ENCODE measurements at regions of chr7 and their contacts with region 1.

Region 1: DNA sequence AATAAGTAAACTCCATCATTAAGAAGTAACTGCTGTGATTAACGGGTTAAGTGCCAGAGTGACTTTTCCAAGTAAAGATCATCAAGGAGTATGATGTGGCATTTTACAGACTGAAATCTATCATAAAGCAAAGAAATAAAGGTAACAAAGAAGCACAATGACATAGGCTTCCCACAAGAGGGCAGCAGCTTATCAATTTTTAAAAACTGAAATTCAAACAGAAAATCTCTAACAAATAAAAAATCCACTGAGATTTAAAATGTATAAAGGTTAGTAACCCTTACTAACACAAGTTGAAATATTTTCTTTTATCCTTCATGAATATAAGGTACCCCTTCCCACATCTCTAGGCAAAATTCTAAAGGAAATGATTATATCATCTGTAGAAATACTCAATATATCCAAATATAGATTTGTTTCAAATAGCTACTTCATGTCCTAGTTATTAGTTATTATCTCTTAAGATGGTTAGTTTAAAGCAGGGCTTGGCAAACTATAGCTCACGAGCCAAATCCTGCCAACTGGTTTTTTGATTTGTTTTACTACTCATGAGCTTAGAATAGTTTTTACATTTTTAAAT is 29.2 kb downstream of the FAM3C start:
- DNase-seq: no peak
- H3K4me3 ChIP-seq: no peak overlapping the region
- H3K27ac ChIP-seq: no peak overlapping the region
- H3K4me1 ChIP-seq: no peaks in the 10 kb centered on the region
- H3K27me3 ChIP-seq: no peaks in the 10 kb centered on the region
- CTCF ChIP-seq: peak; percentile 54 to 71 (median 56)
- POLR2A ChIP-seq: no peak

Region 2: GRCh38 chr7:121410829-121411596 is 44.1 kb after region 1 on chr7:
- intact Hi-C with region 1: no loop called
- DNase-seq: no peak
- H3K4me3 ChIP-seq: no peak overlapping the region
- H3K27ac ChIP-seq: no peak overlapping the region
- H3K4me1 ChIP-seq: no peaks in the 10 kb centered on the region
- H3K27me3 ChIP-seq: no peaks in the 10 kb centered on the region
- CTCF ChIP-seq: no peak
- POLR2A ChIP-seq: no peak

Region 3: GRCh38 chr7:121547544-121548092 is 180.7 kb after region 1 on chr7:
- intact Hi-C with region 1: loop called (anchors 5 kb)
- DNase-seq: no peak
- H3K4me3 ChIP-seq: no peak overlapping the region
- H3K27ac ChIP-seq: no peak overlapping the region
- H3K4me1 ChIP-seq: peaks cover 9% of the 10 kb centered on the region
- H3K27me3 ChIP-seq: no peaks in the 10 kb centered on the region
- CTCF ChIP-seq: peak; percentile 66 to 87 (median 80)
- POLR2A ChIP-seq: no peak